ENCODE measurements at regions of chr4 and their contacts with region 1.

Region 1: GRCh38 chr4:108570993-108571569 is 49.3 kb upstream of the RPL34 start:
- DNase-seq: no peak
- ATAC-seq: no peak
- H3K4me3 ChIP-seq: no peak overlapping the region
- H3K27ac ChIP-seq: no peak overlapping the region
- H3K4me1 ChIP-seq: no peaks in the 10 kb centered on the region
- H3K27me3 ChIP-seq: no peaks in the 10 kb centered on the region
- CTCF ChIP-seq: no peak

Region 2: GRCh38 chr4:108029731-108030130 is 541.4 kb before region 1 on chr4:
- intact Hi-C with region 1: loop called (anchors 10 kb)
- DNase-seq: no peak
- ATAC-seq: no peak
- H3K4me3 ChIP-seq: no peak overlapping the region
- H3K27ac ChIP-seq: no peak overlapping the region
- H3K4me1 ChIP-seq: no peaks in the 10 kb centered on the region
- H3K27me3 ChIP-seq: no peaks in the 10 kb centered on the region
- CTCF ChIP-seq: no peak

Region 3: DNA sequence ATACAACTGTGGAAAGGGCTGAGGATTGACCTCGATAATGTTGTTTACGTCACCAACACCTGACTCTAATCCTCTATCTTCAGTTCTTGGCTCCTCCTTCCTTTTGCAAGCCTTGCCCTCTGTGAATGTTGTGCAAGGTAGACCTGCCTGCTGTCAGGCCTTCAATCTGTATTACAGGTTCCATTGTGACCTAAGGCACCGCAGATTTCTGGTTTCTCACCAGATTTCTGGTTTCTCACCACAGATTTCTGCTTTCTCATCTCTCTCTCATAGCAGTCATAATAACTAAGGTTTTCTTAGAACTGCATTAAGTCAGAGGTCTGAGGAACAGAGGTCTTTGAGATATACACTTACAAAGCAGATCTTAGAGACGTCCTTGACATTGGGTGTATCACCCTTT is 243.2 kb after region 1 on chr4:
- intact Hi-C with region 1: no loop called
- DNase-seq: no peak
- ATAC-seq: no peak
- H3K4me3 ChIP-seq: no peak overlapping the region
- H3K27ac ChIP-seq: no peak overlapping the region
- H3K4me1 ChIP-seq: no peaks in the 10 kb centered on the region
- H3K27me3 ChIP-seq: no peaks in the 10 kb centered on the region
- CTCF ChIP-seq: no peak

Measured in upper lobe of right lung (tissue), 1 donor.